K562 (cell line): ENCODE measurements at regions of chr5 and their contacts with region 1.

Region 1: GRCh38 chr5:149222914-149223848 is 48.5 kb upstream of the AFAP1L1 start:
- DNase-seq: no peak
- ATAC-seq: peak; percentile 47
- H3K4me3 ChIP-seq: no peak overlapping the region
- H3K27ac ChIP-seq: no peak overlapping the region
- H3K4me1 ChIP-seq: no peaks in the 10 kb centered on the region; a peak in 1 of 5 replicates
- H3K27me3 ChIP-seq: peaks cover 2 to 7% of the 10 kb centered on the region in 2 experiments; a peak in 2 of 5 replicates
- CTCF ChIP-seq: no peak
- EP300 ChIP-seq: no peak
- POLR2A ChIP-seq: no peak
- RAD21 ChIP-seq: no peak

Region 2: GRCh38 chr5:149162401-149163084 is 60.6 kb before region 1 on chr5:
- CTCF ChIA-PET with region 1: no interaction called
- POLR2A ChIA-PET with region 1: no interaction called
- in situ Hi-C with region 1: no loop called
- intact Hi-C with region 1: no loop called
- DNase-seq: no peak
- ATAC-seq: no peak
- H3K4me3 ChIP-seq: no peak overlapping the region
- H3K27ac ChIP-seq: no peak overlapping the region
- H3K4me1 ChIP-seq: no peaks in the 10 kb centered on the region
- H3K27me3 ChIP-seq: peaks cover 0 to 5% of the 10 kb centered on the region in 2 experiments; a peak in 1 of 5 replicates
- CTCF ChIP-seq: no peak
- EP300 ChIP-seq: no peak
- POLR2A ChIP-seq: no peak
- RAD21 ChIP-seq: no peak

Region 3: DNA sequence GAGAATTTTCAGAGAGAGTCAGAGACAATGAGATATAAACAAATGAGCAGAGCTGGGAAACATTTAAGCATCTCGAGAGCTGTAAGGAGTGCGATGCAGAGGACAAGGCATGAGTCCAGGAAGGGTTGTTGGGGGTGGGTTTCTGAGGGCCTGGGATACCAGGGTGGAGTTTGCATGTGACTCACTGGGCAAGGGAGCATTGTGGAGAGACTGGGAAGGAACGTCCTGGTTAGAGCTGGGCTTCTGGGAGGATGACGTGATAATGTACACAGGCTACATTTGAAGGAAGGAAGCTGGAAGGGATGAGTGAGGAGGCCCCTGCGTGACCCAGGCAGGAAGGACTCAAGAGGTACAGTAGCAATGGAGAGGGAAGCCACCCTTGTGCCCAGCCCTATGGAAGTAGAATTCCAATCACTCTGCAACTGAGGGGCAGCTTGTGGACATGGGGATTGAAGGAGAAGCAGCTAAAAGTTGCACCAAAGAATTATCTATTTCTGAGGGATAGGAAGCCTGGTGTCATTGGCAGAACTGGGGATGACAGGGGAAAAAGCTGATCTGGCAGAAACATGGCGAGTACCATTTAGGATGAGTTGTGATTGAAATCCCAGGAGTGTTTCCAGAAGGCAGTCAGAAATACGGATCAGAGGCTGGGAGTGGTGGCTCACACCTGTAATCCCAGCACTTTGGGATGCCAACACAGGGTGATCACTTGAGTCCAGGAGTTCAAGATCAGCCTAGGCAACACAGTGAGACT is 10.8 kb before region 1 on chr5:
- CTCF ChIA-PET with region 1: no interaction called
- POLR2A ChIA-PET with region 1: interaction called, 11 read pairs
- in situ Hi-C with region 1: no loop called
- intact Hi-C with region 1: no loop called
- DNase-seq: no peak
- ATAC-seq: no peak
- H3K4me3 ChIP-seq: no peak overlapping the region
- H3K27ac ChIP-seq: no peak overlapping the region
- H3K4me1 ChIP-seq: no peaks in the 10 kb centered on the region; a peak in 1 of 5 replicates
- H3K27me3 ChIP-seq: peaks cover 6 to 38% of the 10 kb centered on the region in 2 experiments
- CTCF ChIP-seq: no peak
- EP300 ChIP-seq: no peak
- POLR2A ChIP-seq: no peak
- RAD21 ChIP-seq: no peak

Region 4: GRCh38 chr5:149381987-149382340 is 158.8 kb after region 1 on chr5:
- CTCF ChIA-PET with region 1: no interaction called
- POLR2A ChIA-PET with region 1: no interaction called
- in situ Hi-C with region 1: no loop called
- intact Hi-C with region 1: no loop called
- DNase-seq: peak; percentile 81 to 85 (median 84)
- ATAC-seq: peak; percentile 97
- H3K4me3 ChIP-seq: no peak overlapping the region
- H3K27ac ChIP-seq: no peak overlapping the region
- H3K4me1 ChIP-seq: peaks cover 3 to 25% of the 10 kb centered on the region in 2 experiments; a peak in 3 of 5 replicates
- H3K27me3 ChIP-seq: no peaks in the 10 kb centered on the region
- CTCF ChIP-seq: peak; percentile 91 to 95 (median 92)
- EP300 ChIP-seq: no peak
- POLR2A ChIP-seq: no peak
- RAD21 ChIP-seq: peak; percentile 88 to 95